Activated CD4-positive, alpha-beta T cell treated with anti-CD3 and anti-CD28 coated beads for 36 hours (primary cell): ENCODE measurements at regions of chr15 and their contacts with region 1.

Region 1: DNA sequence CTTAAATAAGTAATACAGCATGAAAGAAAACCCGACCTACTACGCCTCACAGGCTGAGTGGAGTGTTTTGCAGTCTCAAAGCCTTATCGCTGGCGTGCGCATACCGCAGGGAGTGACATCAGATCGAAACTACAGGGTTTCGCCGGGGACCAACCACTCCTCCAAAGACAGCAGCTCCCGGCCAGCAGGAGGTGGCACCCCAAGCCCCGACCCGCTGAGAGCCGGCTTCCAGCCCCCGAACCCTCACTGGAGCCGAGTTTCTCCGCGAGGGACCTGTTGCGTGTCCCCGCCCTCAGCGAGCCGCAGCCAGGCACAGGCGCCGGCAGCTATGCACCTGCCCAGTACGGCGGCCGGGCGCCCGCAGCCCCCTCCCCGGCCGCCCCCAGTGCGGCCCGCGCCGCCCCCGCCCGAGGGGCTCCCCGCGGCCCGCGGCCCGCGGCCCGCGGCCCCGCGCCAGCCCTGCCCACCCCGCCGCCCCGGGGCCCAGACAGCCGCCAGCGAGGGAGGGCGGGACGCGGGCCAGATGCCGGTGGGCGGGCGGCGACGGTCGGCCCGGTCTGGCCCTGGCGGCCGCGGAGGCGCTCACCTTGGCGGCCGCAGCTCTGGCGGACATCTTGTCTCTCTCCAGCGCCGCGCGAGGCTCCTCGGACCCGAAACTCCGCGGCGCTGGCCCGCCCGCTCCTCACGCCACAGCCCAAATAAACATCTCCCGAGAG is 694 bp downstream of the TJP1 start:
- DNase-seq: peak; percentile 65
- ATAC-seq: peak; percentile 72
- H3K4me3 Mint-ChIP-seq: no peak overlapping the region
- H3K27ac Mint-ChIP-seq: no peak overlapping the region
- H3K4me1 Mint-ChIP-seq: peaks cover 16% of the 10 kb centered on the region
- H3K27me3 Mint-ChIP-seq: peaks cover 56% of the 10 kb centered on the region

Region 2: GRCh38 chr15:28955160-28956008 is 866.2 kb before region 1 on chr15:
- CTCF ChIA-PET with region 1: no interaction called
- POLR2A ChIA-PET with region 1: no interaction called
- intact Hi-C with region 1: no loop called
- DNase-seq: no peak
- ATAC-seq: peak; percentile 60
- H3K4me3 Mint-ChIP-seq: no peak overlapping the region
- H3K27ac Mint-ChIP-seq: no peak overlapping the region
- H3K4me1 Mint-ChIP-seq: peaks cover 43% of the 10 kb centered on the region
- H3K27me3 Mint-ChIP-seq: no peaks in the 10 kb centered on the region

Region 3: GRCh38 chr15:29045717-29046116 is 775.9 kb before region 1 on chr15:
- CTCF ChIA-PET with region 1: no interaction called
- POLR2A ChIA-PET with region 1: no interaction called
- intact Hi-C with region 1: loop called in 1 of 2 experiments (anchors 10 kb)
- DNase-seq: peak; percentile 54
- ATAC-seq: peak; percentile 100
- H3K4me3 Mint-ChIP-seq: no peak overlapping the region
- H3K27ac Mint-ChIP-seq: peak overlapping the region; percentile 25
- H3K4me1 Mint-ChIP-seq: peaks cover 58% of the 10 kb centered on the region
- H3K27me3 Mint-ChIP-seq: no peaks in the 10 kb centered on the region

Region 4: DNA sequence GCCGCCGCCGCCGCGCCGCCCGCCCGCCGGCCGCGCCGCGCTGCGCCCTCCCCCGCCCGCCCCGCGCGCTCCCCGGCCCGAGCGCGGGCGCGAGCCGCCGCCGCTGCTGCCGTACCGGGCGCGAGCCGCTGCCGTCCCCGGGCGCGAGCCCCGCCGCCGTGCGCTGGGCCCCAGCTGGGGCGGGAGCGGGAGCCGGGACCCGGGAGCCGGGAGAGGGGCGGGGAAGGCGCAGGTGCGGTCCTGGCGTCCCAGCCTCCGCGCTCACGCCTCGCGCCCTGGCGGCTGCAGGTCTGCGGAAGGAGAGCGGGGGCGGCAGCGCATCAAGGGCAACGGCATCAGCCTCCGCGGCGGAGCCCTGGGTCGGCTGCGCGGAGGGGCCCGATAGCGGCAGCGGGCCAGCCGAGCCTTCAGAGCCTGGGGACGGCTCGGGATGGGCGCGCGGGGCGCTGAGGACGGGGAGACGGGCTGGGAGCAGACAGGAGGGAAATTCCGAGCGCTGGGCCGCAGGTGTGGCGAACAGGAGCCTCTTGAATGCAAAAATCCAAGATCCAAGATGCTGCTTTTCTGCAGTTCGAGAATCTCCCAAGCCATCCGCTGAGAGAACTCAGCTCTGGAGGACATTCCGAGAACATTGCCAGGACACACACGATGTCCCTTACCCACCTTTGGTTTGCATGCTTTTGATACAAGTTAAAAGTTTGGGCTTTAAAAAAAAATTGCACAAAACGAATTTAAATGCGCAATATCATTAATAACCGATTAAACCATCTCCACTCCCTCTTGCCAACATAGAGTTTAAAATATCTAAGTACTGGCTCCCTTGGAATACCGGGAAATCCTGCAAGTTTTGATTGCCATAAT is 250.4 kb before region 1 on chr15:
- CTCF ChIA-PET with region 1: no interaction called
- POLR2A ChIA-PET with region 1: no interaction called
- intact Hi-C with region 1: loop called in 1 of 2 experiments (anchors 5 kb)
- DNase-seq: peak; percentile 54
- ATAC-seq: peak; percentile 26
- H3K4me3 Mint-ChIP-seq: peak overlapping the region; percentile 2
- H3K27ac Mint-ChIP-seq: no peak overlapping the region
- H3K4me1 Mint-ChIP-seq: peaks cover 7% of the 10 kb centered on the region
- H3K27me3 Mint-ChIP-seq: peaks cover 55% of the 10 kb centered on the region

Region 5: DNA sequence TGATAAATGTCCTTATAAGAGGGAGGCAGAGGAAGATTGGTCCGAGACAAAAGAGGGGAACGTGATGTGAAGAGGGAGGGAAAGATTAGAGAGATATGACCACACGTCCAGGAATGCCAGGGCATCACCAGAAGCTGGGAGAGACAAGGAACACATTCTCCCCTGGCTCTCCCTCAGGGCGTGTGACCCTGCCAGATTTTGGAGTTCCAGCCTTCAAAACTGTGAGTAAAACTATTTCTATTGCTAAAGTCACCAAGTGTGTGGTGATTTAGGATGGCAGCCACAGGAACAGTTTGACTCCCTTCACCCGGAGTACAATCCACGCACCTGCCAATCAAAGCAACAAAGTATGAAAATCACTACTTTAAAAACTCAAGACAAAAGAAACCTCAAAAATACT is 32.8 kb after region 1 on chr15:
- CTCF ChIA-PET with region 1: no interaction called
- POLR2A ChIA-PET with region 1: no interaction called
- intact Hi-C with region 1: no loop called
- DNase-seq: no peak
- ATAC-seq: no peak
- H3K4me3 Mint-ChIP-seq: no peak overlapping the region
- H3K27ac Mint-ChIP-seq: no peak overlapping the region
- H3K4me1 Mint-ChIP-seq: no peaks in the 10 kb centered on the region
- H3K27me3 Mint-ChIP-seq: peaks cover 16% of the 10 kb centered on the region